Astrocyte of the cerebellum (primary cell): ENCODE measurements at regions of chr7 and their contacts with region 1.

Region 1: GRCh38 chr7:119761776-119762175 is 511.2 kb upstream of the KCND2 start:
- DNase-seq: no peak
- H3K4me3 ChIP-seq: no peak overlapping the region
- CTCF ChIP-seq: no peak

Region 2: GRCh38 chr7:119711104-119711503 is 50.7 kb before region 1 on chr7:
- in situ Hi-C with region 1: no loop called
- DNase-seq: no peak
- H3K4me3 ChIP-seq: no peak overlapping the region
- CTCF ChIP-seq: no peak

Region 3: GRCh38 chr7:119802147-119802546 is 40.4 kb after region 1 on chr7:
- in situ Hi-C with region 1: loop called (anchors 5 kb)
- DNase-seq: no peak
- H3K4me3 ChIP-seq: no peak overlapping the region
- CTCF ChIP-seq: no peak